ENCODE measurements at regions of chr9 and their contacts with region 1.

Region 1: DNA sequence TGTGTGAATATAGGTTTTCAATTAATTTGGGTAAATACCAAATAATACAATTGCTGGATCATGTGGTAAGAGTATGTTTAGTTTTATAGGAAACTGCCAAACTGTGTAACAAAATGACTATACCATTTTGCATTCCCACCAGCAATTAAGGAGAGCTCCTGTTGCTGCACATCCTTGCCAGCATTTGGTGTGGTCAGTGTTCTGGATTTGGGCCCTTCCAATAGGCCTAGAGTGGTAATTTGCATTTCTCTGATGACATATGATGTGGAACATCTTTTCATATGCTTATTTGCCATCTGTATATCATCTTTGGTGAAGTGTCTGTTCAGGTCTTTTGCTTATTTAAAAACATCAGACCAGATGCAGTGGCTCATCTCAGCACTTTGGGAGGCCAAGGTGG is 11.6 kb upstream of the RFK start:
- DNase-seq: no peak
- ATAC-seq: no peak
- H3K4me3 ChIP-seq: no peak overlapping the region
- H3K27ac ChIP-seq: no peak overlapping the region
- H3K4me1 ChIP-seq: no peaks in the 10 kb centered on the region
- H3K27me3 ChIP-seq: no peaks in the 10 kb centered on the region

Region 2: GRCh38 chr9:76419782-76420380 is 14.0 kb after region 1 on chr9:
- intact Hi-C with region 1: loop called in 1 of 4 experiments (anchors 2 kb)
- DNase-seq: no peak
- ATAC-seq: no peak
- H3K4me3 ChIP-seq: no peak overlapping the region
- H3K27ac ChIP-seq: no peak overlapping the region
- H3K4me1 ChIP-seq: no peaks in the 10 kb centered on the region
- H3K27me3 ChIP-seq: no peaks in the 10 kb centered on the region

Measured in right cardiac atrium (tissue), 5 donors.